Left ventricle myocardium superior (tissue), 1 donor: ENCODE measurements at regions of chr10 and their contacts with region 1.

Region 1: GRCh38 chr10:72692057-72692910 is at the start of gene MCU:
- DNase-seq: peak; percentile 96
- ATAC-seq: peak; percentile 98
- total RNA-seq, gene MCU: 15.6 TPM

Region 2: DNA sequence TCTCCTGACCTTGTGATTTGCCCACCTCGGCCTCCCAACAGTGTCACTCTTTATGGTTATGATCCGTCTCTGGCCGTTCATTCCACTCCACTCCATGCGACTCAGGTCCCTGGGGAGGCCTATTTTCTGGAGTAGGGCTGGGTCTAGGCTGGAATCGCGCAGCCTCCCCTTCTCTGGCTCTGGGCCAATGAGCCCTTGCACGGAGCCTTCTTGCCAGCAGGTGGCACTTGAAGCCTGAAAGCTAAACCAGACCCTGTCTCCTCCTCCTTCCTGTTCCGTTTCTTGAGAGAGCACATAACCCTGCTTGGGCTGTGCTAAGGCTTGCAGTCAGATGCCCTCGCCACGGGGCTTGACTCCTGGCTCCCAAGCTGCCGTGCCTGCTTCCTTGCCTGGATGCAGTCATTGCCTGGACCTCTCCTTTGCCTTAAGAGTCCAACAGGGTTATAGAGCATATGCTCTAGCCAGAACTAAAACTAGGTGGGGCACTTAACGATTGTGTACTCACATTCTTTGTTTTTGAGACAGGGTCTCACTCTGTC is 328.0 kb before region 1 on chr10:
- intact Hi-C with region 1: loop called (anchors 10 kb)
- DNase-seq: peak; percentile 91
- ATAC-seq: peak; percentile 96

Region 3: DNA sequence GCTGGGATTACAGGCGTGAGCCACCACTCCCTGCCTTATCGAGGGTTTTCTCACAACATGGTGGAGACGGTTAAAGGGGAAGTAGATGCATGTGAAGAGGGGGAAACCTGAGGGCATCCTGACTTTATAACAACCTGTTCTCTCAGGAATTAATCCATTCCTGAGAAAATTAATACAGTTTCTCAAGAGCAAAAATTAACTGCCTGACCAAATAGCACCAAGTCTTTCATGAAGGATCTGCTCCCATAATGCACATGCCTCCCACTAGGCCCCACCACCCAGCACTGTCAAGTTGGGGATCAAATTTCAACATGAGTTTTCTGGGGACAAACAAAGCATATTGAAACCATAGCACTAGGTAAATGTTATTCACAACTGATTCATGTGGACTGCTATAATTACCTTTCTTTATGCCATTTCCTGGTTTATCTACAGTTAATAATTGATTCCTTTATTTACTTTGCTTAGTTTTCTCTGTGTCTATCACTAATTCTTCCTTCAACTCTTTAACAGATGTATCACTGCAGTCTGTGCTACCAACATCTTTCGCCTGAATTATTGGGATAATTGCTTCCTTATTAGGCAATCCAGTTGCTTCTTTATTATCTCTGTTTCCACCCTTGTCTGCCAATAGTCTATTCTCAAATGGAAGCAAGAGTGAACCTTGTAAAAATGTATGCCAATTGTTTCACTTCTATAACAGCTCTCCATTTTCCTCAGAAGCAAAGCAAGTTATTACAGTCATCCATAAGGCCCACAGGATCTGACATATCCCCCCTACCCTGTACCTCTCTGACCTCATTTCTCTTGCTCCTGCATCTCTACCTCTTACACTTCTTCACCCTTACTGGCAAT is 53.5 kb before region 1 on chr10:
- intact Hi-C with region 1: no loop called
- DNase-seq: no peak
- ATAC-seq: no peak

Region 4: DNA sequence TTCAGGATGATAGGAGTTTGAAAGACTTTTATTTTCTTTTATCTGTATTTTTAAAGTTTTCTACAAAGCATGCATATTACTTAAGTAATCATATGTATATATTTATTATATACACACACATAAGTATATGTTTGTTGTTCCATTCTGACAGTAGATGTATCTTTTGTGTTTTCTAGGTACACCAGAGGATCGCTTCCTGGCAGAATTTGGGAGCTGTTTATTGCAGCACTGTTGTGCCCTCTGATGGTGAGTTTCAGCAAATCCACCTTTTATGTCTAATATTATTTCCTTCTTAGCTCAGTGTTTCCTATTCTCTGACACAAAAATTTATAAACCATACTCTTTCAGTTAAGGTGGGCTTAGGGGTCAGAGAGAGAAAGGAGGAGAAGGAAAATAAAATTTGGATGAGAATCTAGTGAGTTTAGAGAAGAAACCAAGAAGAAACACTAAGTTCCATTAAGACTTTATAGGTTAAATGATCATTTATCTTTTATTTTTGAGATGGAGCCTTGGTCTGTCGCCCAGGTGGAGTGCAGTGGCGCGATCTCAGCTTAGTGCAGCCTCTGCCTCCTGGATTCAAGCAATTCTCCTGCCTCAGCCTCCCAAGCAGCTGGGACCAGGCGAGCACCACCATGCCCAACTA is 142.0 kb after region 1 on chr10:
- intact Hi-C with region 1: loop called (anchors 2 kb)
- DNase-seq: no peak
- ATAC-seq: peak; percentile 77